HAP-1 (cell line): ENCODE measurements at regions of chr15 and their contacts with region 1.

Region 1: DNA sequence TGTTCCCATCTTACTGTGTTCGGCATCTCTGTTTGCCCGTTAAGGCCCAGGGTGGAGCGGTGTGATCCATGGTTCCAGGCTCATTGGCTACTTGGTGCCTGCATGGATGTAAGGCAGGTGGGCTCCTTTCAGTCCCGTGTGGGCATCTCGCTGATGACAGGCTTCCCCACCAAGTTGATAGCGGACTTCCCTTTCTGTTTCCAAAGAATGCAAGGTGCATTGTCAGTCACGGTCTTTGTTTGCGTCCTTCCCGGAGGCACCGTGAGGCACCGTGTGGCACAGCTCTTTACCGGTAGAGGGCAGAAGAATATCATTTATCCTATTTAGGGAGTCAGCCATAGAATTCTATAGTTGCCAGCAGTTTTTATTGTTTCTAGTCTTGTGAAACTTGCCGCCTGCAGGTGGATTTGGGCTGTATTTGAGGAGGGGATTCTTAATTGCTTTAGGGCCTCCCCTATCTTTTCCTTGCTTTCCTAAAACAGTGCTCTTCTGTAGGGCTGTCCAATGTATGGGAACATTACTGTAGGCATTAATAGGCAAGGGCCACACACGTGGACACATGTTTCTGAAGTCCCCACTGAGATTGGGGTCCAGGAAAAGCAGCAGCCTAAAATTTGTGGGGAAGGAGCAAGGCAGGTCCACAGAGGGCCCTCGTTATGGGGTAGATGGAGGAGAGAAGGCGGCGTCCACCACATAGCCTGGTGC is 244.1 kb downstream of the SLCO3A1 start:
- DNase-seq: peak; percentile 77 to 81
- H3K4me3 ChIP-seq: no peak overlapping the region
- H3K4me1 ChIP-seq: peaks cover 2% of the 10 kb centered on the region; the same call in 1 of the 2 replicates
- H3K27me3 ChIP-seq: no peaks in the 10 kb centered on the region

Region 2: GRCh38 chr15:92385096-92385495 is 287.5 kb after region 1 on chr15:
- in situ Hi-C with region 1: loop called (anchors 5 kb)
- DNase-seq: no peak
- H3K4me3 ChIP-seq: no peak overlapping the region
- H3K4me1 ChIP-seq: no peaks in the 10 kb centered on the region
- H3K27me3 ChIP-seq: peaks cover 42% of the 10 kb centered on the region

Region 3: GRCh38 chr15:92407321-92407720 is 309.7 kb after region 1 on chr15:
- in situ Hi-C with region 1: no loop called
- DNase-seq: no peak
- H3K4me3 ChIP-seq: no peak overlapping the region
- H3K4me1 ChIP-seq: peaks cover 29% of the 10 kb centered on the region
- H3K27me3 ChIP-seq: no peaks in the 10 kb centered on the region

Region 4: GRCh38 chr15:92709110-92709790 is 611.6 kb after region 1 on chr15:
- in situ Hi-C with region 1: loop called (anchors 10 kb)
- DNase-seq: no peak
- H3K4me3 ChIP-seq: no peak overlapping the region
- H3K4me1 ChIP-seq: peaks cover 18% of the 10 kb centered on the region
- H3K27me3 ChIP-seq: no peaks in the 10 kb centered on the region